ENCODE measurements at regions of chr18 and their contacts with region 1.

Region 1: GRCh38 chr18:75247611-75248421 is 37.2 kb downstream of the TSHZ1 start:
- DNase-seq: peak; percentile 54
- H3K4me3 ChIP-seq: peak overlapping the region; percentile 53 to 59 (median 56)
- H3K27ac ChIP-seq: peak overlapping the region; percentile 68
- H3K4me1 ChIP-seq: peaks cover 32% of the 10 kb centered on the region
- H3K27me3 ChIP-seq: no peaks in the 10 kb centered on the region
- CTCF ChIP-seq: no peak

Region 2: DNA sequence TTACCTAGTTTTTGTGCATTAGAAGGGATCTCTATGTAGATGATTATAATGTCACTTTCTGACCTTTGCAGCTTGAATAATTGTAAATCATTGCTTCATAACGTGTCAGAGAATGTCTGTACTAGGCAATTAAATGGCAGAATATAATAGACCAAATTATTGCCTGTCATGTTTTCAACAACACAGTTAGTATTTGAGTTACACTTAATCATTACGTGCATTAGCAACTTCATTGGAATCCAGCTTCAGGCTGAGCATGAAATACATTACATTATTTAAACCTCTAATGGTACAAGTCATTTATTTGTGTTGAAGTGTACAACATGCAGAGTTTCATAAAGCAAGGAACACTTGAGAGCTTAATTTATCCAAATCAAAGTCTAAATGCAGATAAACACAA is 602.1 kb before region 1 on chr18:
- CTCF ChIA-PET with region 1: no interaction called
- dilution Hi-C with region 1: no loop called
- in situ Hi-C with region 1: loop called in 1 of 2 experiments (anchors 10 kb)
- intact Hi-C with region 1: no loop called
- DNase-seq: peak; percentile 5
- H3K4me3 ChIP-seq: no peak overlapping the region
- H3K27ac ChIP-seq: no peak overlapping the region
- H3K4me1 ChIP-seq: no peaks in the 10 kb centered on the region
- H3K27me3 ChIP-seq: no peaks in the 10 kb centered on the region
- CTCF ChIP-seq: no peak

Region 3: GRCh38 chr18:74963820-74964446 is 283.9 kb before region 1 on chr18:
- CTCF ChIA-PET with region 1: interaction called, 3 read pairs
- dilution Hi-C with region 1: no loop called
- in situ Hi-C with region 1: no loop called
- intact Hi-C with region 1: loop called (anchors 5 kb)
- DNase-seq: peak; percentile 31
- H3K4me3 ChIP-seq: no peak overlapping the region
- H3K27ac ChIP-seq: no peak overlapping the region
- H3K4me1 ChIP-seq: no peaks in the 10 kb centered on the region
- H3K27me3 ChIP-seq: no peaks in the 10 kb centered on the region
- CTCF ChIP-seq: peak; percentile 16 to 54

Region 4: GRCh38 chr18:75408554-75409506 is 161.0 kb after region 1 on chr18:
- CTCF ChIA-PET with region 1: no interaction called
- dilution Hi-C with region 1: no loop called
- in situ Hi-C with region 1: no loop called
- intact Hi-C with region 1: loop called (anchors 2 kb)
- DNase-seq: peak; percentile 100
- H3K4me3 ChIP-seq: no peak overlapping the region
- H3K27ac ChIP-seq: peak overlapping the region; percentile 76
- H3K4me1 ChIP-seq: peaks cover 29% of the 10 kb centered on the region
- H3K27me3 ChIP-seq: no peaks in the 10 kb centered on the region
- CTCF ChIP-seq: no peak

Region 5: GRCh38 chr18:75489493-75490190 is 241.8 kb after region 1 on chr18:
- CTCF ChIA-PET with region 1: no interaction called
- dilution Hi-C with region 1: no loop called
- in situ Hi-C with region 1: no loop called
- intact Hi-C with region 1: loop called (anchors 5 kb)
- DNase-seq: peak; percentile 88
- H3K4me3 ChIP-seq: no peak overlapping the region
- H3K27ac ChIP-seq: peak overlapping the region; percentile 81
- H3K4me1 ChIP-seq: peaks cover 25% of the 10 kb centered on the region
- H3K27me3 ChIP-seq: no peaks in the 10 kb centered on the region
- CTCF ChIP-seq: no peak

Region 6: GRCh38 chr18:76349067-76349715 is 1101.4 kb after region 1 on chr18:
- CTCF ChIA-PET with region 1: no interaction called
- dilution Hi-C with region 1: no loop called
- in situ Hi-C with region 1: no loop called
- intact Hi-C with region 1: loop called (anchors 2 kb)
- DNase-seq: peak; percentile 58
- H3K4me3 ChIP-seq: peak overlapping the region in 2 of 3 experiments; percentile 25 to 39
- H3K27ac ChIP-seq: no peak overlapping the region
- H3K4me1 ChIP-seq: peaks cover 18% of the 10 kb centered on the region
- H3K27me3 ChIP-seq: no peaks in the 10 kb centered on the region
- CTCF ChIP-seq: peak; percentile 88 to 90